Thyroid gland (tissue), 4 donors: ENCODE measurements at regions of chr15 and their contacts with region 1.

Region 1: GRCh38 chr15:64681424-64682024 is 93.9 kb downstream of the RBPMS2 start:
- DNase-seq: peak; percentile 84 to 88
- H3K4me3 ChIP-seq: no peak overlapping the region
- H3K27ac ChIP-seq: peak overlapping the region in 2 of 3 donors; percentile 51 to 63
- H3K4me1 ChIP-seq: peaks cover 0 to 6% of the 10 kb centered on the region in 2 donors
- H3K27me3 ChIP-seq: no peaks in the 10 kb centered on the region
- CTCF ChIP-seq: peak; percentile 53 to 100 (median 92)
- POLR2A ChIP-seq: no peak

Region 2: DNA sequence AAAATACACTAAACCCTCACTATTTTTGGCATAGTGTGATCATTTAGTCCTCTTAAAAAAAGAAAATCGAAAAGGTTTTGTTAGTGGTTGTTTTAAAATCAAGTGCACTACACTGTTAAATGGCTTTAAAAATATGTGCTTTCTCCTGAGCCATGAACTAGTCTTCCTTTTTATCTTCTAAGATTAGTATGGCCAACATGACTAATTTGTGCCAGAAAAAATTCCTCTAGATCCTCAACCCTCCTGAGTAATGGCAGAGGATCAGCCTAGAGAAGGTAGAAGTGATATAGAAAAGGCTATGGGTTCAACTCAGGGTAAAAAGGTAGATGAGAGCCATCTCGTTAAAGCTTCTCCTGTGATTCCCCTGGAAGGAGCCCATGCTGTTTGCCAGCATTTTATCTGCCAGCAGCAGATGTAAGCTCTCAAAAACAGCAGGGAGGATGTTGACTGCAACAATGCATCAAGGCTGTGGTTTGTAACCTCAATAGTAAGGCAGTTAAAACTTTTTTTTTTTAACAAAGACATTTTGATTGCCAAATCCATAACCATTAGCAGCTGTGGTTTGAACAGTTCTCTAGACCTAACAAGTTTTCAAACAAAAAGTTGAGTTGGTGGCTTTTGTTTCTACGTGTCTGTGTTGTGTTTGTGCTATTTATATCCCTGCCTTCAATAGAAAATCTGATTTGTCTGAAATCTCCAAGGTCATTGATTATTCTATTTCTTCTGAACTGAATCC is 251.4 kb before region 1 on chr15:
- intact Hi-C with region 1: loop called (anchors 5 kb)
- DNase-seq: peak; percentile 13 to 19
- H3K4me3 ChIP-seq: no peak overlapping the region
- H3K27ac ChIP-seq: peak overlapping the region; percentile 12 to 75 (median 61)
- H3K4me1 ChIP-seq: peaks cover 15 to 21% of the 10 kb centered on the region in 2 donors
- H3K27me3 ChIP-seq: no peaks in the 10 kb centered on the region
- CTCF ChIP-seq: no peak
- POLR2A ChIP-seq: no peak

Region 3: GRCh38 chr15:64622410-64623260 is 58.9 kb before region 1 on chr15:
- intact Hi-C with region 1: no loop called
- DNase-seq: no peak
- H3K4me3 ChIP-seq: no peak overlapping the region
- H3K27ac ChIP-seq: no peak overlapping the region
- H3K4me1 ChIP-seq: peaks cover 13 to 32% of the 10 kb centered on the region in 2 donors
- H3K27me3 ChIP-seq: no peaks in the 10 kb centered on the region
- CTCF ChIP-seq: no peak
- POLR2A ChIP-seq: no peak

Region 4: GRCh38 chr15:64731012-64731806 is 49.7 kb after region 1 on chr15:
- intact Hi-C with region 1: loop called (anchors 2 kb)
- DNase-seq: peak; percentile 95 to 96
- H3K4me3 ChIP-seq: no peak overlapping the region
- H3K27ac ChIP-seq: peak overlapping the region in 1 of 3 donors; percentile 6
- H3K4me1 ChIP-seq: peaks cover 0 to 8% of the 10 kb centered on the region in 2 donors
- H3K27me3 ChIP-seq: no peaks in the 10 kb centered on the region
- CTCF ChIP-seq: peak; percentile 85 to 99 (median 95)
- POLR2A ChIP-seq: no peak

Region 5: DNA sequence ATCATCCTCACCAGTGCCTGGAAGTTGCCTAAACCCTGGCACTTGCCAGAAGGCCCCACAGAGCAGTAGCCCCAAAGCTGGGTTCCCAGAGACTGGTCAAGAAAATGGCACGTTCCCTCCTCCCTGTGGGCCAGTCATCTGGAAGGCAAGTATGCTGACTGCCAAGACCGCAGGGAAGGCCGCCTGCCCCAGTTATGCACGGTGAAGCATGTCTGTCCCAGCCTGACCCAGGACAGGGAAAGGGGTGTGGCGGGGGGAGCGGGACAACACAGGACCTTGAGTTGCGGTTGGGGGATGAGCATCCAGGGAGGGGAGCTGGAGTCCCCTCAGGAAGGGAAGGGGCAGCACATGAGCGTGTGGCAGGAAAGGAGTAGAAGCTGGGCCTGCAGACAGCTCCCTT is 60.9 kb after region 1 on chr15:
- intact Hi-C with region 1: no loop called
- DNase-seq: peak; percentile 89 to 93
- H3K4me3 ChIP-seq: no peak overlapping the region
- H3K27ac ChIP-seq: peak overlapping the region; percentile 65 to 77 (median 70)
- H3K4me1 ChIP-seq: peaks cover 25 to 34% of the 10 kb centered on the region in 2 donors
- H3K27me3 ChIP-seq: no peaks in the 10 kb centered on the region
- CTCF ChIP-seq: no peak
- POLR2A ChIP-seq: no peak

Region 6: DNA sequence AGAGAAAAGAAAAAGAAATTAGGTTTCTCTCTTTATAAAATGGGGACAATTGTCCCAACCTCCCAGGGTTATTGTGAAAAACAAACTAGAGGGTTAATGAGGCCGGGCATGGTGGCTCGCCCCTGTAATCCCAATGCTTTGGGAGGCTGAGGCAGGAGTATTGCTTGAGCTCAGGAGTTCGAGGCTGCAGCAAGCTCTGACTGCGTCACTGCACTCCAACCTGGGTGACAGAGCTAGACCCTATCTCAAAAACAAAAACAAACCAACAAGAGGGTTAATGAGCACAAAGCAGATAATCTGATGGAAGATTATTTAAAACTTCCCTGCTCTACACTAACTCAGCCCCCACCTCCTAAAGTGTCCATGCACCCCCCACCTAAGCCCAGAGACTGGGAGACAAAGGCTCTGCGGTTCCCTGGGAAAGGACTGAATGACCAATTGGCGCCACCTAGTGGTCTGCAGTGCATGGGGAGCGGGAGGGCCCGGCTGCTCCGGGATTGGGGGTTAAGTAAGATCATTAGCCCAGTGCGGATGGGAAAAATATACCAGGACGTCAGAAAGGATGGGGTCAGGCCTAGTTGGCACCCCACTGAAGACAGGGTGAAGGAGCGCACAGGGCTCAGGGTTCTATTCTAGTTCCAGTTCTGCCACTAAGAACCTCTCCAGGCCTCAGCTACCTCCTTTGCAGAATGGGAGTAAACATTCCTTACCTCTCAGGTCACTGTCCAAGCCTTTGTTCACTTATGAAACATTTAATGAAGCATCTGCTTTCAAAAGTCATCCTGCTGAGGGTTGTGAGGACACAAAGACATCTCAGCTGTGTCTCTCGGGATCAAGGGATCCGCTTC is 128.3 kb after region 1 on chr15:
- intact Hi-C with region 1: loop called (anchors 5 kb)
- DNase-seq: peak; percentile 77 to 85
- H3K4me3 ChIP-seq: no peak overlapping the region
- H3K27ac ChIP-seq: no peak overlapping the region
- H3K4me1 ChIP-seq: no peaks in the 10 kb centered on the region
- H3K27me3 ChIP-seq: no peaks in the 10 kb centered on the region
- CTCF ChIP-seq: peak; percentile 66 to 94 (median 90)
- POLR2A ChIP-seq: no peak

Region 7: DNA sequence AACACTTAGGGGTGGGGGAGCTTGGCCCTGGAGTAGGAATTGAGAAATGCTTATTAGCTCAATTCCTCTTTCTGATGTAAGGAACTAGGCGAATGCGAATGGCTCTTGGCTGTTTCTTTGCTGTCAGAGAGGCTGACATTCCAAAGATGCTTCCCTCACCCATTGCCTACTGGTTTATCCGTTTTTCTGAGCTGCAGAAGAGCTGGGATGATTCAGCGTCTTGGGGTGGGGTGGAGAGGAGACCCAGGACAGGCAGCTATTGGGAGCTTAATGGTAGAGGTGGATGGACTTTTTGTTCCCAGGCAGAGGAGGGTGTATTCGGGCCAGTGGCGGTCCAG is 169.9 kb after region 1 on chr15:
- intact Hi-C with region 1: no loop called
- DNase-seq: no peak
- H3K4me3 ChIP-seq: no peak overlapping the region
- H3K27ac ChIP-seq: peak overlapping the region; percentile 32 to 93 (median 91)
- H3K4me1 ChIP-seq: peaks cover 76 to 100% of the 10 kb centered on the region in 2 donors
- H3K27me3 ChIP-seq: no peaks in the 10 kb centered on the region
- CTCF ChIP-seq: no peak
- POLR2A ChIP-seq: no peak